Prostate gland (tissue), 2 donors: ENCODE measurements at regions of chr7 and their contacts with region 1.

Region 1: GRCh38 chr7:56074371-56074791 is 10.3 kb downstream of the SUMF2 start:
- DNase-seq: peak; percentile 94
- H3K4me3 ChIP-seq: no peak overlapping the region
- H3K27ac ChIP-seq: no peak overlapping the region
- H3K4me1 ChIP-seq: peaks cover 9% of the 10 kb centered on the region
- H3K27me3 ChIP-seq: no peaks in the 10 kb centered on the region
- CTCF ChIP-seq: peak; percentile 77 to 97 (median 92)
- POLR2A ChIP-seq: no peak

Region 2: GRCh38 chr7:55887821-55888247 is 186.5 kb before region 1 on chr7:
- intact Hi-C with region 1: loop called (anchors 10 kb)
- DNase-seq: no peak
- H3K4me3 ChIP-seq: peak overlapping the region; percentile 33 to 36
- H3K27ac ChIP-seq: peak overlapping the region in 1 of 2 donors; percentile 32
- H3K4me1 ChIP-seq: no peaks in the 10 kb centered on the region
- H3K27me3 ChIP-seq: no peaks in the 10 kb centered on the region
- CTCF ChIP-seq: no peak
- POLR2A ChIP-seq: no peak

Region 3: GRCh38 chr7:56003749-56004148 is 70.6 kb before region 1 on chr7:
- intact Hi-C with region 1: loop called (anchors 5 kb)
- DNase-seq: no peak
- H3K4me3 ChIP-seq: no peak overlapping the region
- H3K27ac ChIP-seq: no peak overlapping the region
- H3K4me1 ChIP-seq: no peaks in the 10 kb centered on the region
- H3K27me3 ChIP-seq: no peaks in the 10 kb centered on the region
- CTCF ChIP-seq: no peak
- POLR2A ChIP-seq: no peak